H1 (cell line): ENCODE measurements at regions of chr1 and their contacts with region 1.

Region 1: DNA sequence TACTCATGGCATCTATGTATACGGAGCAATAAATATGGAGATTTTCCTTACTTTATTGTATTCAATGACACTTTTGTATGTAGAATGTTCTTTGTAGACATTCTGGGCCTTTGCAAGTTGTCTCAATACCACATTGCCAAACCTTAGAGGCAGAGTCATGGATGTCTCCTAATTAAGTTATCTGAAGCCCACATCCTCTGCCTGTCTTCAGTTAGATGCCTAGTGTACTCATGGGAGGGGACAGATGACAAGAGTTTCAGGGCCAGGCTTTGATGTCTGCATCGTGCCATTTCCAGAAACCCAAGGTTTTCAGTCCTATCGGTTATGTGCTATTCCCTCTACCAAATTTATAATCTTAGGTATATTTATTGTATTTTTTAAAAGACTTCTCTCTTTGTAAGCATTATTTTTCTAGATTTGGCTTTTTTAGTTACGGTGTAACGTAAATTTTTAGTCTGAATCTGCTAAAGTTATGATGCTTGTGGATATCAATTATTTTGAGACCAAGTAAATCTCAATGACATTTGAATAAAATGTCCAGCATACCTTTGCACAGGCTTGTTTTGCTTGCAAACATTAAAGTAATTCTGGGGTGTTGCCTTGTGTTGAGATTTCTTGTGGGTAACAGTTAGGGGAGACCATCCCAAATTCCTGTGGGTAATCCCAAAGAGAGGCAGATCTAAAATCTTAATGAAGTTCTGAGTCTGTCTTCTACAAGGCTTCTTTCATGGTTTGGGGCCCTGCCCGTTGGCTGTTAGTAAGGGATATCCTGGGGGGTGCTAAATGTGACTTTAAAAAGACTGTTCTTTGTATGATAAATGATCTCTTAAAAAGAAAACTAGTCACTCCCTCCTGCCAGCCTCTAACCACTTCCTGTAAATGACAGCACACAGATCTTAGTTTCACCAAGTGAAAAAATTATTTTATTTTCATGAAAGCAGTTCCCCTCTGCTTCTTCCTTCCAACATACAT is 8.0 kb upstream of the MACF1 start:
- DNase-seq: no peak
- H3K4me3 ChIP-seq: no peak overlapping the region
- H3K27ac ChIP-seq: no peak overlapping the region
- H3K4me1 ChIP-seq: peaks cover 0 to 3% (median 1%) of the 10 kb centered on the region in 4 experiments; a peak in 2 of 7 replicates
- H3K27me3 ChIP-seq: no peaks in the 10 kb centered on the region
- CTCF ChIP-seq: no peak
- EP300 ChIP-seq: no peak
- POLR2A ChIP-seq: no peak
- RAD21 ChIP-seq: no peak

Region 2: DNA sequence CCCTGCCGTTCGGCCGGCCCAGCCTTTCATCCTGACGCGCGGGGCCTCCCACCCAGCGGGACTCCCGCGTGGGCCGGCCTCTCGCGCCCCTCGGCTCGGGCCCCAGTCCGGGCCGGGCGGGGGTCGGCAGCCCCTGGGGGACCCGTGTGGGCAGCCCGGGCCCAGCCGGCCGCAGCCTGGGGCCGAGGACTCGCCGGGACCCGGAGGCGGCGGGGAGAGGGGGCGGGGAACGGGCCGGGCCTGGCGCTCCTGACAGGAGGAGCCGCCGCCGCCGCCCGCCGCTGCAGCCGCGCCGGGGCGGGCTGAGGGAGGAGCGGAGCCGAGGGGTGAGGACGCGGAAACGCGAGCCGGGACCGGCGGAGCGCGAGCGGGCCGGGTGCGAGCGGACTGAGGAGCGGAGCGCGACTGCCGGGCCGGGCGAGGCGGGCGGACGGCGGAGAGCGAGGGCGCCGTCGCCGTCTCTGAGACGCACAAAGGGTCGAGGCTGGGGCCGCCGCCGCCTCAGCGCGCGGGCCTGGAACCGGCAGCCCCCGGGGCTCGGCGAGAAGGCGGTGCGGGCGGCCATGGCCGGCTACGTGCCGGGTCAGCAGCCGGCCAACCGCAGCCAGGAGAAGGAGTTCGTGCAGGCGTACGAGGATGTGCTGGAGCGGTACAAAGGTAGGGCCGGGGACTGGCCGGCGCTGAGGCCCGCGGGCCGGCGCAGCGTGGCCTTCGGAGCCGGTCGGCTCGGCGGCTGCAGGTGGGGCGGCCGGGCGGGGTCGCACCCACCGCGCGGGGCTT is 91.3 kb before region 1 on chr1:
- CTCF ChIA-PET with region 1: interaction called, 130 read pairs
- POLR2A ChIA-PET with region 1: interaction called, 12 read pairs
- DNase-seq: peak in 1 of 2 experiments; percentile 67
- H3K4me3 ChIP-seq: peak overlapping the region; percentile 84 to 94 (median 92)
- H3K27ac ChIP-seq: peak overlapping the region; percentile 86
- H3K4me1 ChIP-seq: peaks cover 23 to 37% (median 25%) of the 10 kb centered on the region in 4 experiments
- H3K27me3 ChIP-seq: no peaks in the 10 kb centered on the region
- CTCF ChIP-seq: no peak
- EP300 ChIP-seq: no peak
- POLR2A ChIP-seq: no peak
- RAD21 ChIP-seq: no peak

Region 3: DNA sequence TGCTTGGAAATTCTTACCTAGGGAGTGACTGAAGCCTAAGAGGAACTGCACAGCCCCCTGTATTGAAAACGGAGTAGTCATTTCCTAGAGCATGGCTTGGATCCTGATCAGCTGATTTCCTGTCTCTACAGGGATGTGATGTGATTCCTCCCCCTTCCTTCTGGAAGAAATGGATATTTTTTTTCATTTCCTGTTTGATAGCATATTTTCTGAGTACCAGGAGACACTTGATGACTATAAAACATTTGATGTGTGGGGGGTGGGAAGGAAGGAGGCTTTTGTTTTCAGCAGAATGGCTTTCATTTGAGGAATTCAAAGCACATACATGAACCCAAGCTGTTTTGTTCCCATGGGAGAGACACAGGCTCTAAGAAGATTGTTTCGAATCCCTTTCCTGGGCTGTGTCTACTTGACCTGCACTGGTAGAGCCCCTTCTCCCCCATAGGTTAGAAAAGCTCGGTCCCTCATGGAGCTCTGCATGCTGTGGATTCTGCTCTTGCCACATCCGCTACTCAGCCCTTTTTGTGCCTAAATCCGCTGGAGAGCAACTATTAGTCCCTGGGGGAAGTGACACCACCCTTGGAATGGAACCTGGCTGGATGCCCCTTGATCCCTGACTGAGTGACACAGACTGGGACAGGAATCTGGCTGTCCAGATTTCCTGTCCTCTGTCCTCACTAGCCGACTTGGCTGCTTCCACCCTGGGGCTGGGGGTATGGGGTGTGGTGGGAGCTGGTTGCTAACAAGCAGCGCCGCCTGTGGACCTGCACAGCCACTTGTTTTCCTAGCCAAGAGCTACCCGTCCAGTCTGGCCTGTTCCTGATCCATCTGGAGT is 63.8 kb before region 1 on chr1:
- CTCF ChIA-PET with region 1: interaction called, 195 read pairs
- POLR2A ChIA-PET with region 1: interaction called, 11 read pairs
- DNase-seq: peak; percentile 65 to 78
- H3K4me3 ChIP-seq: peak overlapping the region in 1 of 4 experiments; percentile 23; a peak in 1 of 8 replicates
- H3K27ac ChIP-seq: peak overlapping the region; percentile 84
- H3K4me1 ChIP-seq: peaks cover 6 to 33% (median 21%) of the 10 kb centered on the region in 4 experiments
- H3K27me3 ChIP-seq: no peaks in the 10 kb centered on the region
- CTCF ChIP-seq: peak; percentile 39 to 74 (median 57)
- EP300 ChIP-seq: peak in 1 of 2 experiments; percentile 88; a peak in 1 of 3 replicates
- POLR2A ChIP-seq: peak in 1 of 2 experiments; percentile 29; a peak in 1 of 3 replicates
- RAD21 ChIP-seq: peak; percentile 50 to 58

Region 4: GRCh38 chr1:39170731-39171667 is 25.5 kb before region 1 on chr1:
- CTCF ChIA-PET with region 1: interaction called, 86 read pairs
- POLR2A ChIA-PET with region 1: no interaction called
- DNase-seq: no peak
- H3K4me3 ChIP-seq: no peak overlapping the region
- H3K27ac ChIP-seq: peak overlapping the region; percentile 8; the same call in 1 of the 2 replicates
- H3K4me1 ChIP-seq: peaks cover 3 to 21% (median 16%) of the 10 kb centered on the region in 4 experiments; a peak in 6 of 7 replicates
- H3K27me3 ChIP-seq: no peaks in the 10 kb centered on the region
- CTCF ChIP-seq: no peak
- EP300 ChIP-seq: peak in 1 of 2 experiments; percentile 64; a peak in 1 of 3 replicates
- POLR2A ChIP-seq: peak in 1 of 2 experiments; percentile 34; a peak in 1 of 3 replicates
- RAD21 ChIP-seq: peak in 1 of 2 experiments; percentile 18; a peak in 1 of 4 replicates

Region 5: GRCh38 chr1:39228252-39228651 is 31.7 kb after region 1 on chr1:
- CTCF ChIA-PET with region 1: interaction called, 72 read pairs
- POLR2A ChIA-PET with region 1: interaction called, 3 read pairs
- DNase-seq: no peak
- H3K4me3 ChIP-seq: no peak overlapping the region
- H3K27ac ChIP-seq: no peak overlapping the region
- H3K4me1 ChIP-seq: peaks cover 6 to 22% (median 17%) of the 10 kb centered on the region in 4 experiments
- H3K27me3 ChIP-seq: no peaks in the 10 kb centered on the region
- CTCF ChIP-seq: no peak
- EP300 ChIP-seq: no peak
- POLR2A ChIP-seq: no peak
- RAD21 ChIP-seq: no peak

Region 6: GRCh38 chr1:39250460-39251240 is 54.1 kb after region 1 on chr1:
- CTCF ChIA-PET with region 1: interaction called, 16 read pairs
- POLR2A ChIA-PET with region 1: no interaction called
- DNase-seq: no peak
- H3K4me3 ChIP-seq: no peak overlapping the region
- H3K27ac ChIP-seq: no peak overlapping the region
- H3K4me1 ChIP-seq: no peaks in the 10 kb centered on the region
- H3K27me3 ChIP-seq: no peaks in the 10 kb centered on the region
- CTCF ChIP-seq: no peak
- EP300 ChIP-seq: no peak
- POLR2A ChIP-seq: no peak
- RAD21 ChIP-seq: no peak

Region 7: DNA sequence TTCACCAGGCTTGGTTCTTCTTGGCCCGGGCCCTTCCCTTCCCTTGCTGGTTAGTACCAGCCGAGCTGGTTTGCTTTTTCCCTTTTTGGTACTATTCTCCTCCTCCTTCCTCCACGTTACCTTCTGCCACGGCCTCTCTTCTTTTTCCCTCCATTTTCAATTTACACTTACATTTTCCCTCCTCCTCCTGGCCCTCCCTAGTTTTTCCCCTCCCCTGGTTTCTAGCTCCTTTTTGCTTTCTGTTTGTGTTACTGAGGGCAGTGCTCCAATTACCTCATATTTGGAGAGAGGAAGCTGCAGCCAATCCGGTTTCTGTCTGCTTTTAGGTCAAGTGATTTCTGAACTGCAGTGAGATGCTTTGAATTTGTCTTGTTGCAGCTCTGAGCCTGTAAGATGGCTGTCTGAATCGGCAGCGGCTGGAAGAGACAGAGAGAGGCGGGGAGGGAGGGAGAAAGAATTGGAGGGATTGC is 71.6 kb after region 1 on chr1:
- CTCF ChIA-PET with region 1: interaction called, 157 read pairs
- POLR2A ChIA-PET with region 1: no interaction called
- DNase-seq: no peak
- H3K4me3 ChIP-seq: peak overlapping the region; percentile 16 to 49 (median 22); a peak in 7 of 8 replicates
- H3K27ac ChIP-seq: peak overlapping the region; percentile 67
- H3K4me1 ChIP-seq: peaks cover 10 to 21% (median 18%) of the 10 kb centered on the region in 4 experiments; a peak in 6 of 7 replicates
- H3K27me3 ChIP-seq: no peaks in the 10 kb centered on the region
- CTCF ChIP-seq: no peak
- EP300 ChIP-seq: no peak
- POLR2A ChIP-seq: no peak
- RAD21 ChIP-seq: no peak

Region 8: DNA sequence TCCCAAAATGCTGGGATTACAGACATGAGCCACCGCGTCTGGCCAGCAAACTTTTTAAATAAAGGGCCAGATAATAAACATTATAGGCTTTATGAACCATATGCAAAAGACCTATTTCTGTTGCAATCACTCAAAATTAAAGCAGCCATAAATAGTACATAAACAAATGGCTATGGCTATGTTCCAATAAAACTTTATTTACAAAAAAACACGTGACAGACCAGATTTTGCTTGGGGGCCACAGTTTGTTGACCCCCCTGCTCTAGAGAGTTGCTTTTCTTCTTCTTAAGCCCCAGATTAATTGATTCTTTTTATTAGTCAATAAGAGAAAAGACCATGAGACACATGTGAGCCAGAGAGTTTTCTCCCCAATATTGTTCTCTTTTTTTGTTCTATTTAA is 146.2 kb after region 1 on chr1:
- CTCF ChIA-PET with region 1: no interaction called
- POLR2A ChIA-PET with region 1: no interaction called
- DNase-seq: no peak
- H3K4me3 ChIP-seq: no peak overlapping the region
- H3K27ac ChIP-seq: no peak overlapping the region
- H3K4me1 ChIP-seq: peaks cover 0 to 4% (median under 1%) of the 10 kb centered on the region in 4 experiments; a peak in 2 of 7 replicates
- H3K27me3 ChIP-seq: no peaks in the 10 kb centered on the region
- CTCF ChIP-seq: no peak
- EP300 ChIP-seq: no peak
- POLR2A ChIP-seq: no peak
- RAD21 ChIP-seq: no peak